ENCODE measurements at regions of chr14 and their contacts with region 1.

Region 1: DNA sequence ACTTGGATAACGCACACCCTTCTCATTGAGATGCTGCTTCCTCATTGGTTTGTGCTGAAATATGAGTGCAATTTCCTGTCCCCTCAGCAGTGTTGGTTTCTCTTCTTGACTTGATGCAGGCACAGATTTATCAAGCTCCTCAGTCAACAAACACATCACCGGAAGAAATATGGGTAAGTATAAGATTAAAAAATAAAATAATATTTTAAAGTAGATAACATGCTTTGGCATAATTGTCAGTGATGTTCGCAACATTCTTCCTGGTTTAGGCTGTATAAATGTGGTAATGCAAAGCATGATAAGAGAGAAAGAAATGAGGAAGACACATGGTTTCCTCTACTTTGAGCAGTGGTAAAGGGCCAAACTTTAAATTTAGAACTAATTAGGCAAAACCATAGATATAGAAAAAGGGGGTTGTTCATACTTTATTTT is at the start of gene GPR65:
- DNase-seq: peak; percentile 49
- H3K4me3 Mint-ChIP-seq: peak within 1 kb of the TSS; percentile 90
- H3K27ac Mint-ChIP-seq: peak within 1 kb of the TSS; percentile 97
- H3K4me1 Mint-ChIP-seq: peaks cover 54% of the 10 kb centered on the region
- H3K27me3 Mint-ChIP-seq: no peaks in the 10 kb centered on the region

Region 2: GRCh38 chr14:87992718-87993628 is 12.1 kb before region 1 on chr14 and contains the start of gene GALC:
- CTCF ChIA-PET with region 1: interaction called, 10 read pairs
- DNase-seq: peak; percentile 97
- H3K4me3 Mint-ChIP-seq: peak within 1 kb of the TSS; percentile 81
- H3K27ac Mint-ChIP-seq: peak within 1 kb of the TSS; percentile 96
- H3K4me1 Mint-ChIP-seq: peaks cover 55% of the 10 kb centered on the region
- H3K27me3 Mint-ChIP-seq: no peaks in the 10 kb centered on the region